Adrenal gland (tissue), 19 donors: ENCODE measurements at regions of chr19 and their contacts with region 1.

Region 1: DNA sequence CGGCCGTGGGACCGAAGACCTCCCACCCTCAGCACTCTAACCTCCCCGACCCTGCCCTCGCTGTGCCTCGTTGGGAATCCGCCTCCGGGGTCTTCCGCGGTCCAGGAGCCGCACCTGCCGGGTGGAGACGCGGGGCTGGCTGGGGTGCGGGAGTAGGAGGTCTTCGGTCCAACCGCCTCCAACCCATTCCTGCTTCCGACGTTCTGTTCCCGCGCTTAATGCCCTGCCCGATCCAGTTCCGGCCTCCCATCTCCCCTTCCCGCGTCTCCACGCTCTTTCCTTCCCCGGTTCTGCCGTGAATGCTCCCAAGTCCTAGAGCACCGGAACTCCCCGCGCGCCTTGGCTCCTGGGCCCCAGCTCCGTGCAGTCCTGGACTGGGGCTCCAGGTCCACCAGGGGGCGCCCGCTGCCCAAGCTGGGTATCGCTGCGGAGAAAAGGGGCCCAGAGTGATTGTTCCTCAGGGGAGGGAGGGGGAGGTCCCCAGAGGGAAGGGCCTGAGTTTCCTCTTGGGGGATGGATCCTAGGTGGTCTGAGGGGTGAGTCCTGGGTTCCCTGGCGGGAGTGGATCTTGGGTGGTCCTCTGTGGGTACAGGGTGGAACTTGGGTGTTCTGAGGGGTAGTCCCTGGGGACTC is 14.1 kb upstream of the TNFSF9 start:
- DNase-seq: peak; percentile 90 to 95 (median 93)
- H3K4me3 ChIP-seq: peak overlapping the region in 2 of 4 donors; percentile 38 to 65
- H3K27ac ChIP-seq: peak overlapping the region; percentile 10 to 93 (median 75)
- H3K4me1 ChIP-seq: peaks cover 7 to 12% of the 10 kb centered on the region in 2 donors
- H3K27me3 ChIP-seq: no peaks in the 10 kb centered on the region
- CTCF ChIP-seq: peak; percentile 92 to 97 (median 96)
- POLR2A ChIP-seq: no peak

Region 2: DNA sequence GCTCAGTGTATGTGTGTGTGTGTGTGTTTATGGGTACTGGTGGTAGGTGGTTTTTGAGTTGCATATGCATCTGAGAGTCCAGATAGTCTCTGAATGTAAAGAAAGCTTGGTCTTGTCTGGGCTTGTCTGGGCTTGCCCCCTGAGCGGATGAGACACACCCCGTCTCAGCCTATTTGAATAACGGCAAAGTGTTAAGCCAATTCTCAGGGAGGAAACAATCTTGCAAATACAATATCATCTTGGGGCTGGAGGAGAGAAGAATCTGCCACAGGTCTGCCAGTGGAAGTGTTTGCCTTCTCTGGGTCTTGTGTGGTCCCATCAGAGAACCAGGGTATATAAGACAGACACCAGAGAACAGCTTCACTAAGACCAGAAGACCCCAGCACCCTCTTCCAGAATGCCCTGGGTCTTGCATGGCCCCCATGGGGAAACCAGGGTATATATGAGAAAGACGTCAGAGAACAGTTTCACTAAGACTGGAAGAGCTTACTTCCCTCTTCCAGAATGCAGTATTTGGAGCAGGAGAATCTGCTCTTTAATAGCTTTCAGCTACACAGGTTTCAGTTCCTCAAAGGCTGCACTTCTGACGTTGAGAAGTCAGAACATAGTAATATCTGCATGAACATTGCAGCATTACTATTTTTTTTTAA is 60.8 kb after region 1 on chr19:
- intact Hi-C with region 1: no loop called
- DNase-seq: peak in 1 of 7 donors; percentile 18
- H3K4me3 ChIP-seq: no peak overlapping the region
- H3K27ac ChIP-seq: peak overlapping the region in 1 of 5 donors; percentile 54
- H3K4me1 ChIP-seq: no peaks in the 10 kb centered on the region
- H3K27me3 ChIP-seq: peaks cover 3% of the 10 kb centered on the region
- CTCF ChIP-seq: no peak
- POLR2A ChIP-seq: no peak

Region 3: GRCh38 chr19:6632002-6632621 is 115.3 kb after region 1 on chr19:
- intact Hi-C with region 1: loop called (anchors 5 kb)
- DNase-seq: peak; percentile 59 to 87 (median 79)
- H3K4me3 ChIP-seq: no peak overlapping the region
- H3K27ac ChIP-seq: peak overlapping the region in 1 of 5 donors; percentile 80
- H3K4me1 ChIP-seq: no peaks in the 10 kb centered on the region
- H3K27me3 ChIP-seq: peaks cover 5% of the 10 kb centered on the region
- CTCF ChIP-seq: peak; percentile 72 to 85 (median 76)
- POLR2A ChIP-seq: no peak